ENCODE measurements at regions of chr20 and their contacts with region 1.

Region 1: GRCh38 chr20:23350196-23350903 is at the start of gene NXT1:
- DNase-seq: peak; percentile 95
- H3K4me3 Mint-ChIP-seq: peak within 1 kb of the TSS; percentile 96
- H3K27ac Mint-ChIP-seq: peak within 1 kb of the TSS; percentile 100
- H3K4me1 Mint-ChIP-seq: peaks cover 17% of the 10 kb centered on the region
- H3K27me3 Mint-ChIP-seq: no peaks in the 10 kb centered on the region
- total RNA-seq, gene NXT1: 49.7 and 55.7 TPM in 2 replicates

Region 2: GRCh38 chr20:21559305-21559704 is 1791.0 kb before region 1 on chr20:
- intact Hi-C with region 1: loop called (anchors 5 kb)
- DNase-seq: peak; percentile 15
- H3K4me3 Mint-ChIP-seq: no peak overlapping the region
- H3K27ac Mint-ChIP-seq: no peak overlapping the region
- H3K4me1 Mint-ChIP-seq: peaks cover 33% of the 10 kb centered on the region
- H3K27me3 Mint-ChIP-seq: peaks cover 9% of the 10 kb centered on the region

Region 3: DNA sequence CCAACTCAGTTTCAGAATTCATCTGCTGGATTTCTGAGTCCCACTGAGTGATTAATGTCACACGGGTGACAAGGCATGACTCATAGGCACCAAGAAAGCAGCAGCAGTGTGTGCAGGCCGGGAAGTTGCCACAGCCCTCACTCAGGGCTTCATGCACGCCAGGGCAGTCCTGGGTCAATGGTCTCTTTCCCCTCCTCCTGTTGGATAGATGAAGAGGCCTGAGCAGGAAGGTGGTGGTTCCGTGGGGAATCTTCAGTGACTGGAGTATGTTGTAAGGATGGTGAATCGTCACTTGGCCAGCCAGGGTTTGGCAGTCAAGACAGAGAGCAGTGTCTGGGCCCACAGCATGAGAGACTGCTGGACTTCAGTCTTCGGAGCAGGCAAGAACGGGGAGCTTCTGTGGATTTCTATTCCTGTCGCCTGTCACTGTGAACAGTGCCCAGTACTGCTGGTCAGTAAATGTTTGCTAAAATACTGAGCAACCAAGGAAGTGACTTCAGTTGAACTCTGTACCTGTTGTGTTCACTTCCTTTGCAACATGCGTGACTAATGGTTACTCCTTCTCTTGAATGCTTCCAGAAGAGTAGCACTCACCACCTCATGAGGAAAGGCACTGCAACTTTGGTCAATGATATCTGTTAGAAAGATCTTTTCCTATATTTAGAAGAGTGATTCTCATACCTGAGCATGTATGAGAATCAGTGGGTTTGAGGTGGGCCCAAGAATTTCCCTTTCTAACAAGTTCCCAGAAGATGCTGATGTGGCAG is 202.2 kb before region 1 on chr20:
- intact Hi-C with region 1: loop called (anchors 2 kb)
- DNase-seq: peak; percentile 20
- H3K4me3 Mint-ChIP-seq: peak overlapping the region; percentile 38
- H3K27ac Mint-ChIP-seq: peak overlapping the region; percentile 91
- H3K4me1 Mint-ChIP-seq: peaks cover 64% of the 10 kb centered on the region
- H3K27me3 Mint-ChIP-seq: peaks cover 5% of the 10 kb centered on the region

Region 4: DNA sequence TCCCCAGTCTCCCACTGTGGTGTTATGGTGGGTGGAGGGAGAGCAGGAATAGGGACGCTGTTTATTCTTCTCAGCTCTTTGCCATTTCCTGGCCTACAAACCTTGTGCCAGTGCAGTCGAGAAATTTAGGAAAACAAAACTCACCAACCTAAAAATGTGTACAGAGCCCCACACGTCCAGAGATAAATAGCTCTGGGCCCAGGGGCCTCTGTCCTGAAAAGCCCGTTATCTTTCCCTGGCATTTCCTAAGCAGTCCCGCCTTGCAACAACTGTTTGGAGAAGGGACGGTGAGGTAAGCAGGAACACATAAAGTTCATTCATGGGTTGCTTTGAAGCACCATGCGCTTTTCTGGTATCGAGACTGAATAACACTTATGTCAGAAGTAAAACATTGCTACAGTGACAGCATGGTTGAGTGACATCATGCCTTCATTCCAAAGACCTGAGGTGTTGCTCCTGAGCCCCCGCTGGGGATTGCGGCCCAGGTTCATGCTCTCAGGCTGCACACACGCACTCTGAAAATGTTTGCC is 79.9 kb before region 1 on chr20:
- intact Hi-C with region 1: no loop called
- DNase-seq: no peak
- H3K4me3 Mint-ChIP-seq: no peak overlapping the region
- H3K27ac Mint-ChIP-seq: no peak overlapping the region
- H3K4me1 Mint-ChIP-seq: no peaks in the 10 kb centered on the region
- H3K27me3 Mint-ChIP-seq: no peaks in the 10 kb centered on the region

Region 5: GRCh38 chr20:23420943-23421931 is 70.9 kb after region 1 on chr20 and contains the start of gene NAPB:
- intact Hi-C with region 1: loop called (anchors 1 kb)
- DNase-seq: peak; percentile 90
- H3K4me3 Mint-ChIP-seq: peak within 1 kb of the TSS; percentile 93
- H3K27ac Mint-ChIP-seq: peak within 1 kb of the TSS; percentile 90
- H3K4me1 Mint-ChIP-seq: peaks cover 39% of the 10 kb centered on the region
- H3K27me3 Mint-ChIP-seq: peaks cover 6% of the 10 kb centered on the region
- total RNA-seq, gene NAPB: 13.8 and 14.0 TPM in 2 replicates

Region 6: GRCh38 chr20:24027229-24027628 is 676.9 kb after region 1 on chr20:
- intact Hi-C with region 1: loop called (anchors 10 kb)
- DNase-seq: peak; percentile 74
- H3K4me3 Mint-ChIP-seq: peak overlapping the region; percentile 2
- H3K27ac Mint-ChIP-seq: peak overlapping the region; percentile 84
- H3K4me1 Mint-ChIP-seq: peaks cover 44% of the 10 kb centered on the region
- H3K27me3 Mint-ChIP-seq: no peaks in the 10 kb centered on the region